ENCODE measurements at regions of chr12 and their contacts with region 1.

Region 1: GRCh38 chr12:26226629-26227360 is 31.4 kb downstream of the SSPN start:
- DNase-seq: peak in 9 of 10 donors; percentile 39 to 77 (median 57)
- H3K4me3 ChIP-seq: peak overlapping the region; percentile 43 to 80 (median 65)
- H3K27ac ChIP-seq: peak overlapping the region; percentile 64 to 98 (median 92)
- H3K27me3 ChIP-seq: no peaks in the 10 kb centered on the region
- CTCF ChIP-seq: peak in 11 of 56 donors; percentile 6 to 26 (median 13)

Region 2: DNA sequence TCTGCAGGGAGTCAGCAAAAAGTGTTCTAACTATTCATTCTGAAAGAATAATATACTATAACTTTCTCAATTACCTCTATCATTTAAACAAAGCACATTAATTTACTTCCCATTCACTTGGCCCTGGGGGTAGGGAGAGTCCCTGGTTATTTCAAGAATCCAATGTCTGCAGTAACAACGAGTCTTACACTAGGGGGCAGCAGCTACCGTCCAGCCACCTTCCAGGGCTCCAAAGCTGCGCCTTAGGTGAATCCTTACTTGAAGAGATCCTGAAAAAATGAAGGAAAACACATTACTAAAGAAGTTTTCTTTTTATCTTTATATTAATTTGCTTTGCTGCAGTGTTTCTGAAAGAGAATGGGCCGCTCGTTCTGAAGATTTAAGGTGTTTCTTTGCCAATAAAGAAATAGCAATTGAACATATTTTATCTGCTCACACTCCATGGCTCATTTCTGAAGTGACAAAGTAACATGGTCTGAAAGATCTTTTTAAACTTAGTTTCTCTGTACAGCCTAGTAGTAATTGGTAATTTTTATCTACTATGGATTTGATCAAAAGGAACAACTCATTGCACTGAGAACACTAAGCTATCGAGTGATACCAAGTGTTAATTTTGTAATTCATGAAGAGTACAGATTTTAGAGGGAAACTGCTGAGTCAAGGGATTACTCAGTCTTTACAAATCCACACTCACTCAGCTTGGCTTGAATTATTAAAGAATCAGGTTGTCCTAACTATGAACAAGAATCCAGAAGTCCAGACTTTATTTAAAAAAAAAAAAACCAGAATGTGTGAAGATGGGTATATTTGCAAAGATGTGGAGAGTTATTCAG is 129.5 kb before region 1 on chr12:
- intact Hi-C with region 1: no loop called
- DNase-seq: peak; percentile 51 to 81 (median 70)
- H3K4me3 ChIP-seq: peak overlapping the region in 3 of 59 donors; percentile 2 to 20 (median 11)
- H3K27ac ChIP-seq: peak overlapping the region in 10 of 59 donors; percentile 7 to 65 (median 30)
- H3K27me3 ChIP-seq: no peaks in the 10 kb centered on the region
- CTCF ChIP-seq: peak; percentile 79 to 99 (median 93)

Region 3: DNA sequence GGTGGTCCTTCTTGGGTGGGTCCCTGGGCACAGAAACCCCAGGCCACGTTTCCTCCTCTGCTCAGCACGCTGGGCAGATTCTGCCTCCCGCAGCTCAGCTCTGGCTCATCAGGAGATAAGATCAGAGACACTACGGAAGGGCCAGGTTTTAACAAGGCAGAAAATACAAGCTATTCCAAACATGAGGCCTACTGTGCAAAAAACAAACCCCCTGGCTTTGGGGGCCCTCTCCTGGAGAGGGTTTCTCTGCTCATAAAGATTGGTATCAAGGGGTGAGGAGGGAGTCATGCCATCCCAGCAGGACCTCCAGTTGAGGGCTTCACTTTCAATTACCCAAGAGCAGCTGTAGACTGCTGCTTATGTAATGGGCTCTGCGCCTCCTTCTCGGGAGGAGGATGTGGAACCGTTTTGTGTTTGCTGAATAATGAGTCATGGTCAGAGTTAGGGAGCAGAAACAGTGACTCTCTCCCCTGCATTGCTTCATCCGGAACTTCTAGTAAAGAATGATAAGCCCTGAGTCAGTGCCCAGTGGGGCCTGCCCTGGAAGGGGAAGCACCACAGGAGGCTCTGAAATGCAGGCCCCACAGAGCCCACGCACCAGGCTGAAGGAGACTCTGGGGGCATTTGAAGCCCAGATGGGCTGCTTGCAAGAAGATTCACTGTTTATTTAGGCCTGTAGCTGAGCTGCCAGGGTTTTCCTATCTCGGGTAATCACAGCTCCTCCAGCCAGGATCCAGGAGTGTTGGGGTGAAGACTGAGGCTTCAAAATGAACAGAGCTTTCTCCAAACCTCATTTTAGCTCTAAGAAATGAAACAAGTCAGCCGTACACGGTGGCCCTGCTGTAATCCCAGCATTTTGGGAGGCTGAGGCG is 47.9 kb after region 1 on chr12:
- intact Hi-C with region 1: loop called in 1 of 2 experiments (anchors 5 kb)
- DNase-seq: peak in 8 of 10 donors; percentile 47 to 79 (median 65)
- H3K4me3 ChIP-seq: peak overlapping the region in 2 of 59 donors; percentile 3 to 16
- H3K27ac ChIP-seq: peak overlapping the region; percentile 26 to 94 (median 86)
- H3K27me3 ChIP-seq: no peaks in the 10 kb centered on the region
- CTCF ChIP-seq: peak in 31 of 56 donors; percentile 7 to 48 (median 26)

Measured in dorsolateral prefrontal cortex (tissue), 120 donors.